BJ (cell line): ENCODE measurements at regions of chr2 and their contacts with region 1.

Region 1: GRCh38 chr2:216388046-216388884 is 16.0 kb upstream of the MARCHF4 start:
- DNase-seq: no peak
- H3K4me3 ChIP-seq: no peak overlapping the region
- H3K27me3 ChIP-seq: no peaks in the 10 kb centered on the region
- CTCF ChIP-seq: no peak

Region 2: GRCh38 chr2:216366777-216367471 is 21.3 kb before region 1 on chr2:
- CTCF ChIA-PET with region 1: no interaction called
- POLR2A ChIA-PET with region 1: no interaction called
- DNase-seq: no peak
- H3K4me3 ChIP-seq: no peak overlapping the region
- H3K27me3 ChIP-seq: no peaks in the 10 kb centered on the region
- CTCF ChIP-seq: no peak

Region 3: DNA sequence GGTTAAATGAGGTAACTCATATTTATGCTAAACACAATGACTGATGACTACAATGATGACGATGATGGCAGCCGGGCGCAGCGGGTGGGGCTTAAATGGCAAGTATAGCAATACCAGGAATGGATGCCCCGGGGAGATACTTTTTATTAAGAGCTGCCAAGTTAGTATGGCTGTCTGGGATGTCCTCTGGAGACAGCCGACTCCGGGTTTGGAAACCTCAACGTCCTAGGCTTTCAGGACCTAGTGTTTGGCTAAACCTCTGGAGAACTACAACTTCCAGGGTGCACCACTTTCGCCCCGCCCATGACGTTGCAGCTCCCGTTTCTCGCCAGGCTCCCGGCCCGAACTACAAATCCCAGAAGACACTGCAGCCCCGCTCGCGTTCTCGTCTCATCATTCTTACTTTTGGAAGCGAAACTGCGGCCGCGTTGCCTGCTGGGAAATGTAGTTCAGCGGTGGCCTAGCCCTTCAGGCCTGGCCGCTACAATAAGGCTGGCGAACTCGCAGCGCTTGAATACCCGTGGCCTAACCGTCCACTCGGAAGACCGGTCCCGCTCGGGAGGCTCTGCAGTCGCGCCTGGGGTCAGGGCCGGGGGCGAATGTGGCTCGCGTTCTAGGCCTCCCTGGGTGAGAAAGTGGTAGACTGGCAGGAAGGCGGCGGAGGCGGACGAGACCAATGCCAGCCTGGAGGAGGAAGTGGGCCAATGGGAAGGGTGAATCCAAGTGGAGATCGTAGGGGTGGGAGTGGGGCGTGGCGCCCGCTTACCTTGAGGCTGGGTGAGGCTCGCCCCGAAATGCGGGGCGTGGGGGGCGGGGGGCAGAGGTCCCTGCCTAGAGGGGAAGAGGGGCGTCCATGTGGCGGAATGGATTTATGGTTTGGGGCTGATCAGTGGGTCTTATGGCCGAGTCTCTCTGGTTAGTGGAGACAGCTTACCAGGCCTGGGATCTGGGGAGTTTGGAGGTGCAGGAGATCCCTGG is 24.0 kb after region 1 on chr2 and contains the start of gene SMARCAL1:
- CTCF ChIA-PET with region 1: no interaction called
- POLR2A ChIA-PET with region 1: interaction called, 12 read pairs
- DNase-seq: peak; percentile 90
- H3K4me3 ChIP-seq: peak within 1 kb of the TSS; percentile 94
- H3K27me3 ChIP-seq: no peaks in the 10 kb centered on the region
- CTCF ChIP-seq: no peak
- polyA plus RNA-seq, gene SMARCAL1: 37.3 and 41.2 TPM in 2 replicates

Region 4: GRCh38 chr2:216478151-216478550 is 89.9 kb after region 1 on chr2:
- CTCF ChIA-PET with region 1: no interaction called
- POLR2A ChIA-PET with region 1: no interaction called
- DNase-seq: no peak
- H3K4me3 ChIP-seq: no peak overlapping the region
- H3K27me3 ChIP-seq: no peaks in the 10 kb centered on the region
- CTCF ChIP-seq: no peak

Region 5: DNA sequence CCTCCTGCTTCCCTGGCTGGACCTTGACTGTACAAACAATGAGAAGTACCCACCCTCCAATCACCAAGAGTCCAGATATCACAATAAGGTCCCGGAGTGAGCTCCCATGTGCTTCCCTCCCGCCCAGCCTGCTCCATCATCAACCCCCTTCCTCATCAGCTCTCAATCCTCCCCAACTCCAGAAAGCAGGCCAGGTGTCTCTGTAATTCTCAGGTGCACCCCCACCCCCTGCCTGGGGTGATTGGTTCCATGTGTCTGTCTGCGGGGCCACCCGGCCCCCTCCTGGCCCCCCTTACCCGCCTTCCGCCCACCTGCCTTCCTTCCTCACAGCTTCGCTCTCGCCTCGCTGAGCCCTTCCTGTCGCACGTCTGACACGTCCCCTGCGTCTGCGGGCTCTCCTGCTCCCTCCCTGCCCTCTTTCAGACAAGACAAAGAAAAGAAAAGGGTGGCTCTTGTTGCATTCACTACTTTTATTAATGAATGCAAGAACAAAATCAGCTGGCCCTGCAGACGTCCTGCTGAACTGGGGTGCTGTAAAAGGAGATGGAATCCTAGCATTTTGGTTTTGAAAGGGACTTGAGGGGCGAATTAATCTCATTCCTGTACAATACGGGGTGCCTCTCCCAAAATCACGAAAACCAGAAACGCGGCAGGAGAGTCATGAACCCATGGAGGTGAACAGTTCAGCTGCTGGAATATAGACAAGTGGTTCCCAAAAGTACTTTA is 218.4 kb after region 1 on chr2:
- CTCF ChIA-PET with region 1: no interaction called
- POLR2A ChIA-PET with region 1: no interaction called
- DNase-seq: no peak
- H3K4me3 ChIP-seq: no peak overlapping the region
- H3K27me3 ChIP-seq: peaks cover 6% of the 10 kb centered on the region
- CTCF ChIP-seq: no peak